Panc1 (cell line): ENCODE measurements at regions of chr16 and their contacts with region 1.

Region 1: GRCh38 chr16:30417529-30418349 is 10.3 kb downstream of the ZNF771 start:
- DNase-seq: peak; percentile 81
- ATAC-seq: peak; percentile 94
- H3K4me3 ChIP-seq: peak overlapping the region; percentile 45 to 55
- H3K27ac ChIP-seq: peak overlapping the region; percentile 77
- H3K4me1 ChIP-seq: peaks cover 13% of the 10 kb centered on the region
- H3K27me3 ChIP-seq: no peaks in the 10 kb centered on the region
- CTCF ChIP-seq: no peak

Region 2: DNA sequence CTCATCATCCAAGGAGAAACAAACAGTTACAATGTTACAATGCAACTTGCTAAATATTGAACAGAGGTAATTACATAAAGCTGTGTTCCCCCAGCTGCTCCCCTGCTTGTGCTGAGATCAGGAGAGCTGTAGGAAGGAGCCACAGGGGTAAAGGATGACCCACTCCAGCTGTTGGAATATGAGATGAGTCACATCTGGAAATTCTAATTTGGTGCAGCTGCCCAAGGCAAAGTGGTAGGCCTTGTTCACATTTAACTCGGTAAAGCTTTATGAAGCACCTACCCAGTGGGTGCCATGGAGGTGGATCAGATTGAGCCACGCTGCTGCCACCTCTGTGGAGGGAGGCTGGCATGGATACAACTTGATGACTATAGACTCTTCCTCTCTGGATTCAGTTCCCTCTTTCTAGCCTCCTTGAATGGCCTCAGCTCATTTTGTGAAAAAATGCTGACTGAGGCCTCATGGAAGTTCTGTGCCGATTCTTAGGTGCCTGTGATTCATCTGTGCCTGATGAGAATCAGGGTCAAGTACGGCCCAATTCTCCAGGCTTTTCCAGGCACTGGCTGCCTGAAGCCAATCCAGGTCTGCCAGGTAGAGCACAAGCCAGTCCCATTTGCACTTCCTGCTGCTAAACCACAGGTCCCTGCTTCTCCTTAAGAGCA is 185.0 kb after region 1 on chr16:
- CTCF ChIA-PET with region 1: interaction called, 19 read pairs
- POLR2A ChIA-PET with region 1: no interaction called
- in situ Hi-C with region 1: no loop called
- intact Hi-C with region 1: no loop called
- DNase-seq: no peak
- ATAC-seq: no peak
- H3K4me3 ChIP-seq: no peak overlapping the region
- H3K27ac ChIP-seq: no peak overlapping the region
- H3K4me1 ChIP-seq: peaks cover 3% of the 10 kb centered on the region; the same call in 1 of the 2 replicates
- H3K27me3 ChIP-seq: no peaks in the 10 kb centered on the region
- CTCF ChIP-seq: no peak

Region 3: DNA sequence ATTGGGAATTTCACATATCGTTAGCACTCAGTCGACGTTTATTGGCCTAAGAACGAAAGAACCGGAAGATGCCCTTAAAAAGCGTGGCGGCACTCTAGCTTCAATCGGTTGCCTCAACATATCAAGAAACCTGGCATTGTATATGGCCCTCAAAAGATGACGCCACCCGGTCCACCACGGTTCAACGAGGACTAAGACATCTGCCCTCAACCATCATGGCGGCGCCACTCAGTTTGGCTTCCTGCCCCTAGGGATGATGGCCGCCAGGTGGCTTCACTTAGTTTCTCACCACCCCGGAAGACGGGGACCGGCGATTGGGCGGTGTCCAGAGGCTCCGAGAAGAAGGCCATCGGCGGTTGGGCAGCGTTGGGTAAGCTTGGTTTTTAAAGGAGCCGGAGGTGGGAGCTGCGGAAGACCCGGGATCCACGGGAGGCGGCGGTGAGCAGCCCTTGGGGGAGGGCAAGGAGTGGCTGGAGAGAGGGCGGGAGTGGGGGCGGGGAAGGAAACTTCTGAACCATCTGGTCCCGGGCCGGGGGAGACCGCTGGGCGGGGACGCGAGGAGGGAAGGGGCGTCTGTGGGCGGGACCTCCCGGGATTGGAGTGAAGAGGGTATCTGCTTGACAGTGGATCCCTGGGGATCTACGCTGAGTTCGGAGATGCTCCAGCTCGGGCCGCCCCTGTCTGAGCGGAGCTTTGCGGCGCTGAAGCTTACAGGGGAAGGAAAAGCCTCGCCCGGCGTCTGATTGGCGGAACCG is 232.8 kb after region 1 on chr16 and contains the start of gene PRR14:
- CTCF ChIA-PET with region 1: no interaction called
- POLR2A ChIA-PET with region 1: no interaction called
- in situ Hi-C with region 1: no loop called
- intact Hi-C with region 1: no loop called
- DNase-seq: peak; percentile 93
- ATAC-seq: peak; percentile 94
- H3K4me3 ChIP-seq: peak within 1 kb of the TSS; percentile 87 to 100
- H3K27ac ChIP-seq: peak within 1 kb of the TSS; percentile 91
- H3K4me1 ChIP-seq: peaks cover 7% of the 10 kb centered on the region; the same call in 1 of the 2 replicates
- H3K27me3 ChIP-seq: no peaks in the 10 kb centered on the region
- CTCF ChIP-seq: no peak
- total RNA-seq, gene PRR14: 77.6 TPM

Region 4: GRCh38 chr16:30882429-30883310 is 464.9 kb after region 1 on chr16:
- CTCF ChIA-PET with region 1: no interaction called
- POLR2A ChIA-PET with region 1: interaction called, 14 read pairs
- in situ Hi-C with region 1: no loop called
- intact Hi-C with region 1: no loop called
- DNase-seq: no peak
- ATAC-seq: no peak
- H3K4me3 ChIP-seq: no peak overlapping the region
- H3K27ac ChIP-seq: no peak overlapping the region
- H3K4me1 ChIP-seq: no peaks in the 10 kb centered on the region
- H3K27me3 ChIP-seq: no peaks in the 10 kb centered on the region
- CTCF ChIP-seq: no peak

Region 5: DNA sequence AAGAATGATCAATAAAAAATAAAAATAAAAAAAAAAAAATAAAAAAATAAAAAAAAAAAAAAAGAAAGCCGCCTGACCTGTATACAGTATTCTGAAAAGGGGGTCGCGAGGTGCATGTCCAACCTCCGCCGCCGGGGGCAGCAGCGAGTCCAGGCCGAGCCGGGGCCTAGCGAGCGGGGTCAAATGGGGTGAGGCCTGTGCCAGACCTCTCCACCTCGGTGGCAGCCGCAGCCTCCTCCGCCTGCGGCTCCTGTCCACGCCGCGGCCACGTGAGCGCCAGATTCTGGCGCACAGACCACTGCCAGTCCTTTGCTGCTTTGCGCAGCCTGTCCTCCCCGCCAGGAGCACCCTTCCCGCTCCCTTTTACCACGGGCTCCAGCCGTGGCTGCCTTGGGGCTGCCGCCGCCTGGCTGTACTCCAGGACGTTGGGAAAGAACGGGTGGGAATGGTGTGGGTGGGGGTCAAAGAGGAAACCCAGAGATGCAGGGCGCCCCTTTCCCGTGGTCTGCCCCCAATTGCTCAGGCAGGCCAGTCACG is 688.0 kb after region 1 on chr16:
- CTCF ChIA-PET with region 1: no interaction called
- POLR2A ChIA-PET with region 1: interaction called, 11 read pairs
- in situ Hi-C with region 1: no loop called
- intact Hi-C with region 1: no loop called
- DNase-seq: no peak
- ATAC-seq: peak; percentile 80
- H3K4me3 ChIP-seq: peak overlapping the region in 1 of 2 experiments; percentile 38; a peak in 2 of 4 replicates
- H3K27ac ChIP-seq: peak overlapping the region; percentile 69
- H3K4me1 ChIP-seq: peaks cover 9% of the 10 kb centered on the region; the same call in 1 of the 2 replicates
- H3K27me3 ChIP-seq: no peaks in the 10 kb centered on the region
- CTCF ChIP-seq: peak; percentile 98